K562 (cell line): ENCODE measurements at regions of chr3 and their contacts with region 1.

Region 1: GRCh38 chr3:171772427-171773056 is 37.7 kb downstream of the PLD1 start:
- DNase-seq: peak; percentile 31 to 80 (median 52)
- ATAC-seq: peak; percentile 79
- H3K4me3 ChIP-seq: no peak overlapping the region
- H3K27ac ChIP-seq: no peak overlapping the region
- H3K4me1 ChIP-seq: peaks cover 0 to 6% of the 10 kb centered on the region in 2 experiments; a peak in 2 of 5 replicates
- H3K27me3 ChIP-seq: no peaks in the 10 kb centered on the region
- CTCF ChIP-seq: peak; percentile 73 to 82 (median 82)
- EP300 ChIP-seq: no peak
- POLR2A ChIP-seq: no peak
- RAD21 ChIP-seq: peak; percentile 72 to 79

Region 2: GRCh38 chr3:170953229-170953628 is 819.3 kb before region 1 on chr3:
- CTCF ChIA-PET with region 1: no interaction called
- POLR2A ChIA-PET with region 1: no interaction called
- in situ Hi-C with region 1: no loop called
- intact Hi-C with region 1: loop called (anchors 5 kb)
- DNase-seq: peak in 2 of 4 experiments; percentile 22 to 54
- ATAC-seq: peak; percentile 86
- H3K4me3 ChIP-seq: peak overlapping the region; percentile 17; the same call in 1 of the 2 replicates
- H3K27ac ChIP-seq: no peak overlapping the region; the same call in 2 of the 3 replicates
- H3K4me1 ChIP-seq: peaks cover 0 to 3% of the 10 kb centered on the region in 2 experiments; a peak in 1 of 5 replicates
- H3K27me3 ChIP-seq: peaks cover 0 to 8% of the 10 kb centered on the region in 2 experiments; a peak in 2 of 5 replicates
- CTCF ChIP-seq: no peak
- EP300 ChIP-seq: no peak
- POLR2A ChIP-seq: no peak
- RAD21 ChIP-seq: no peak

Region 3: DNA sequence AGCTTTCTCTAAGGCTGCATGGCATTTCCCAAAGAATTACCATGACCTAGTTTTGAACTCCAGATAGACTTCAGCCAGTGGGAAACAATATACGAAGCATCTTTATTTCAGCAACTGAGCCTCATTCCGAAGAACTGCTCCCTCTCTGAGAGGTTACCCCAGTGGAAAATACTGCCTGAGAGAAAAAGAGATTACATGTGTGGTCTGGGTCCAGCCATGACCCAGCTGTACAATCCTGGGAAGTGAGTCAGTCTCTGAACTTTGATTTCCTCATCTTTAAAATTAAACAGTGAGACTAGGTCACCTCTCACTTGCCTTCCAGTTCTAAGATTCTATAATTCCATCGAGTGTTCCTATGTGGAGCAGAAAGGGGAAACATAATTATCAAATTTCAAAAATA is 354.7 kb before region 1 on chr3:
- CTCF ChIA-PET with region 1: no interaction called
- POLR2A ChIA-PET with region 1: no interaction called
- in situ Hi-C with region 1: no loop called
- intact Hi-C with region 1: no loop called
- DNase-seq: no peak
- ATAC-seq: no peak
- H3K4me3 ChIP-seq: no peak overlapping the region
- H3K27ac ChIP-seq: no peak overlapping the region
- H3K4me1 ChIP-seq: peaks cover 0 to 11% of the 10 kb centered on the region in 2 experiments; a peak in 2 of 5 replicates
- H3K27me3 ChIP-seq: no peaks in the 10 kb centered on the region
- CTCF ChIP-seq: no peak
- EP300 ChIP-seq: no peak
- POLR2A ChIP-seq: no peak
- RAD21 ChIP-seq: no peak

Region 4: GRCh38 chr3:171566803-171567422 is 205.6 kb before region 1 on chr3:
- CTCF ChIA-PET with region 1: no interaction called
- POLR2A ChIA-PET with region 1: no interaction called
- in situ Hi-C with region 1: no loop called
- intact Hi-C with region 1: loop called (anchors 5 kb)
- DNase-seq: peak; percentile 53 to 64 (median 62)
- ATAC-seq: peak; percentile 79
- H3K4me3 ChIP-seq: no peak overlapping the region
- H3K27ac ChIP-seq: no peak overlapping the region
- H3K4me1 ChIP-seq: no peaks in the 10 kb centered on the region
- H3K27me3 ChIP-seq: no peaks in the 10 kb centered on the region
- CTCF ChIP-seq: peak; percentile 58 to 91 (median 68); a peak in 5 of 6 replicates
- EP300 ChIP-seq: no peak
- POLR2A ChIP-seq: no peak
- RAD21 ChIP-seq: peak; percentile 93 to 97

Region 5: DNA sequence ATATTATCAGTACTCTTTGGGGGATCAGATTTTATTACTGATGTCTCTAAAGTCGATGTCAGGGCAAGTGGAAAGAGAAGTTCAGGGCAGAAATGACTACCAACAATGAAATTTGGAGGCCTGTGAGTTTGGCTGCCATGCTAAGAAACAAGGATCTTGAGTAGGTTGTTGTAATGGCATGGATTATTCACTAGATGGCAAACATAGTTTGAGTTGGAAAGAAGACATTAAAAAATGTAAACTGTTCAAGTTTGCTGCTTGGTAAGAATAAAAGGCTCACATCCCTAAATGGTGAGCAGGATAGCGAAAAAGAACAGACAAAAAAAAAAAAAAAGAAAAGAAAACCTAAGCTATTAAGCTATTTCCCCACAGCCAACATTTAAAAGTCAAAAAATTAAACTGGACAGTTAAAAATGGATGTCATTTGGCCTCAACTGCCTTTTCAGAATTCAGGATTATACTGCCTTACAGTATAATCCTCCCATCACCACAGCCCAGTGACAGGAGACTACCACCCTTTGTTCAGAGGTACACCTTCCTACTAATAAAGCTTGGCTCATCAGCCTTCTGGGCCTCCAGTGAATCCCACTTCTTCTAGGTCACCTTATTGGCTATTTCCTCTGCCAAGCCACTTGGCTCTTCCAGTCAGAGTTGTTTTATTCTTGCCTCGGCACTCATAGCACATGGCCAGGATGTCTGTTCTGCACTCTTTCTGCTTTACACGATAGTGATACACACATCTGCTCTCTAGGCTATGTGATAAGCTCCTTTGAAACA is 126.0 kb before region 1 on chr3:
- CTCF ChIA-PET with region 1: interaction called, 24 read pairs
- POLR2A ChIA-PET with region 1: interaction called, 4 read pairs
- in situ Hi-C with region 1: no loop called
- intact Hi-C with region 1: loop called (anchors 1 kb)
- DNase-seq: peak; percentile 11 to 36 (median 17)
- ATAC-seq: peak; percentile 76
- H3K4me3 ChIP-seq: no peak overlapping the region
- H3K27ac ChIP-seq: no peak overlapping the region
- H3K4me1 ChIP-seq: peaks cover 0 to 4% of the 10 kb centered on the region in 2 experiments; a peak in 1 of 5 replicates
- H3K27me3 ChIP-seq: no peaks in the 10 kb centered on the region
- CTCF ChIP-seq: peak; percentile 27 to 65 (median 43); a peak in 3 of 6 replicates
- EP300 ChIP-seq: no peak
- POLR2A ChIP-seq: no peak
- RAD21 ChIP-seq: peak; percentile 37 to 64

Region 6: DNA sequence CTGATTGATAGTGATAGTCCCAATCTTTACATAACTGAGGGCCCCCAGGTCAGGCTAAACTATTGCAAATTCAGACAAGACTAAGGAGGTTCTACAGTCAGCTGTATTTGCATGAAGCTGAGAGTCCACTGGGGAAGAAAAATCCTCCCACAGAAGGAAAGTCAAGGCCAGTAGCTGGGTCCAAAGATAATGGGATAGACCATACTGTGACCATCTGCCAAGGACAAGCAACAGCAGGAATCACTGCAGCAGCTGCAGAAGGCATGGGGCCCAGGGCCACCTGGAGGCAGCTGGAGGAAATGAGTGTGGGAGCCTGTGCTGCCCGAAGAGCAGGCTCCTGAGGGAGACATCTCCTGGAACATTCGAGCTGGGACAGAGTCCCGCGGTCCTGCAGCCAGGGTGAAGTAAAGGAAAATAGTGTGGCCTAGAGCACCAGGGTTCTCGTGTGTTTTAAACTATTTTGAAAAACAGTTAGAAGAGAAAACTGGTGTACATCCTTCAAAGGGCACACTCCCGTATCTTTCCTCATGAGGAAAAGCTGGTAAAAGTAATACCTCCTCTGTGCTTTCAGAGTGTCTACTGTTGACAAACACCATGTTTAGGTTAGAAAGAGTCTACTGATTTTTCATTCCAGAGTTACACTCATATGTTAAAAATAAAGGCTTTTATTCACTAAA is 57.4 kb after region 1 on chr3:
- CTCF ChIA-PET with region 1: no interaction called
- POLR2A ChIA-PET with region 1: interaction called, 3 read pairs
- in situ Hi-C with region 1: no loop called
- intact Hi-C with region 1: loop called (anchors 1 kb)
- DNase-seq: peak in 2 of 4 experiments; percentile 58 to 80
- ATAC-seq: peak; percentile 96
- H3K4me3 ChIP-seq: no peak overlapping the region
- H3K27ac ChIP-seq: no peak overlapping the region
- H3K4me1 ChIP-seq: peaks cover 0 to 15% of the 10 kb centered on the region in 2 experiments; a peak in 3 of 5 replicates
- H3K27me3 ChIP-seq: no peaks in the 10 kb centered on the region
- CTCF ChIP-seq: peak; percentile 71 to 83 (median 75)
- EP300 ChIP-seq: no peak
- POLR2A ChIP-seq: no peak
- RAD21 ChIP-seq: peak; percentile 69 to 89

Region 7: DNA sequence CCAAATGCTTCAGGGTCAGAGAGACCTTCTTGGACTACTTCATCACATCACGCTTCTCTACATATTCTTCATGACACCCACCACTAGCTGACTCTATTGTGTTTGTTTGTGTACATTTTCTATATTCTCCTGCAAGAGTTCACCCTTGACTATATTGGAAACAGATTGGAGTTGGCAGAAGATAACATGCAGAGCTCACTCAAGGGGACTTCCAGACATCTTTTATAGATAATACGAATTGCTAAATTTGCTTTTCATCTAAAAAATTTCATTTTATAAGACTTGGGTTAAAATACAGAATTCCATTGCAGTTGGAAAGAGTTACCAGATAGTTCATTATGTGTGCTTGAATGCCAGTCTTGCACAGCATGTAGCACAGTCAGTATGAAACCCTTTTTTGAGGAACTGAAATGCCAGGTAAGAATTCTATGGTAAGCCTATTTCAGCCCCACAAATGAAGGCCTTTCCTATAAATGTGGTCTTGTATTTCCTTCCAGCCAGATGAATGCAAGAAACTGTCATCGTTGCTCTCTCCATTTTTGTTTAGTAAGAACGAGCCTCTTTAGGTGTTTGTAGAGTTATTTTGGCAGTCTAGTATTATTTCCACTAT is 498.1 kb after region 1 on chr3:
- CTCF ChIA-PET with region 1: no interaction called
- POLR2A ChIA-PET with region 1: no interaction called
- in situ Hi-C with region 1: no loop called
- intact Hi-C with region 1: no loop called
- DNase-seq: no peak
- ATAC-seq: no peak
- H3K4me3 ChIP-seq: no peak overlapping the region
- H3K27ac ChIP-seq: no peak overlapping the region
- H3K4me1 ChIP-seq: no peaks in the 10 kb centered on the region
- H3K27me3 ChIP-seq: no peaks in the 10 kb centered on the region
- CTCF ChIP-seq: no peak
- EP300 ChIP-seq: no peak
- POLR2A ChIP-seq: no peak
- RAD21 ChIP-seq: no peak